ENCODE measurements at regions of chr15 and their contacts with region 1.

Region 1: GRCh38 chr15:77659350-77660321 is 26.9 kb upstream of the LINGO1 start:
- DNase-seq: peak; percentile 22
- H3K4me3 ChIP-seq: no peak overlapping the region
- H3K27ac ChIP-seq: no peak overlapping the region
- H3K4me1 ChIP-seq: no peaks in the 10 kb centered on the region
- H3K27me3 ChIP-seq: peaks cover 0 to 2% of the 10 kb centered on the region in 2 experiments
- CTCF ChIP-seq: peak; percentile 8 to 57
- POLR2A ChIP-seq: no peak

Region 2: GRCh38 chr15:77709135-77709886 is 49.7 kb after region 1 on chr15:
- CTCF ChIA-PET with region 1: no interaction called
- POLR2A ChIA-PET with region 1: no interaction called
- dilution Hi-C with region 1: no loop called
- intact Hi-C with region 1: no loop called
- DNase-seq: no peak
- H3K4me3 ChIP-seq: no peak overlapping the region
- H3K27ac ChIP-seq: no peak overlapping the region
- H3K4me1 ChIP-seq: no peaks in the 10 kb centered on the region
- H3K27me3 ChIP-seq: no peaks in the 10 kb centered on the region
- CTCF ChIP-seq: no peak
- POLR2A ChIP-seq: no peak

Region 3: DNA sequence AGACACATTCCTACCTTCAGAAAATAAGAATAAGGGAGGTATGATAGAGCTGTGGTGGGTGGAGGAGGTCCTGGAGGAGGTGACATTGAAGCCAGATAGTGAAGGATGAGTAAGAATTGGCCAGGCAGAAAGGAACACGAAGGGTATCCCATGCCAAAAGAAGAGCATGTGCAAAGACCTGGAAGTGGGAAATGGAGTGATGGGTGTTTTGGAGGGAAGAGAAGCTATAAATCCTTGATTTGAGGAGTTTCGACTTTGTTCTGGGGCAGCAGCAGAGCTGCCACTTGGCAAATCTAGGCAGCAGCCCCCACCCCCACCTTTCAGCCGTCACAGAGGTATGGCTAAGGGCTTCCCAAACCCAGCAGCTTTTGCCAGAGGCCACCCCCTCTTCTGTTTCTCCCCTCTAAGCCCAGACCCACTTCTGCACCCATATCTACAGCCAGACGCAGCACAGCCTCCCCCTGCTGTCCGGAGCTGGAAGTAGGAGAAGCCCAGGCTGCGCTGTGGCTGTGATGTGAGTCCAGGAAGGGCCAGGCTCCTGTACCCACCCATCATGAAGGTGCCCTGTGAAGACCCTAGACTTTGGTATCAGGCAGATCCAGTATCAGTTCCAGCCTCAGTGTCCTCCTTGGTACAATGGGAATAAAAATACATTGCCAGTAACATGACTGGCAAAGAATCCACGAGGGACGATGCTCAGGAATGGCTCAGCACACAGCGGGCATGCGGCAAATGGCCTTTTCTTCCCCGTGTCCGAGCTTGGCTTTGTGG is 161.7 kb after region 1 on chr15:
- CTCF ChIA-PET with region 1: interaction called, 14 read pairs
- POLR2A ChIA-PET with region 1: no interaction called
- dilution Hi-C with region 1: no loop called
- intact Hi-C with region 1: loop called (anchors 1 kb)
- DNase-seq: peak; percentile 55
- H3K4me3 ChIP-seq: no peak overlapping the region
- H3K27ac ChIP-seq: no peak overlapping the region
- H3K4me1 ChIP-seq: no peaks in the 10 kb centered on the region
- H3K27me3 ChIP-seq: peaks cover 37 to 42% of the 10 kb centered on the region in 2 experiments
- CTCF ChIP-seq: peak; percentile 59 to 88
- POLR2A ChIP-seq: no peak

Region 4: GRCh38 chr15:77870195-77871065 is 210.8 kb after region 1 on chr15:
- CTCF ChIA-PET with region 1: no interaction called
- POLR2A ChIA-PET with region 1: no interaction called
- dilution Hi-C with region 1: no loop called
- intact Hi-C with region 1: loop called (anchors 10 kb)
- DNase-seq: peak; percentile 63
- H3K4me3 ChIP-seq: no peak overlapping the region
- H3K27ac ChIP-seq: no peak overlapping the region
- H3K4me1 ChIP-seq: peaks cover 4% of the 10 kb centered on the region
- H3K27me3 ChIP-seq: no peaks in the 10 kb centered on the region
- CTCF ChIP-seq: peak; percentile 39 to 84
- POLR2A ChIP-seq: no peak

Measured in endothelial cell of umbilical vein (primary cell).